ENCODE measurements at regions of chr2 and their contacts with region 1.

Region 1: GRCh38 chr2:235191978-235192377 is 240.2 kb downstream of the SH3BP4 start:
- DNase-seq: no peak
- H3K4me3 ChIP-seq: no peak overlapping the region
- CTCF ChIP-seq: no peak
- POLR2A ChIP-seq: no peak

Region 2: DNA sequence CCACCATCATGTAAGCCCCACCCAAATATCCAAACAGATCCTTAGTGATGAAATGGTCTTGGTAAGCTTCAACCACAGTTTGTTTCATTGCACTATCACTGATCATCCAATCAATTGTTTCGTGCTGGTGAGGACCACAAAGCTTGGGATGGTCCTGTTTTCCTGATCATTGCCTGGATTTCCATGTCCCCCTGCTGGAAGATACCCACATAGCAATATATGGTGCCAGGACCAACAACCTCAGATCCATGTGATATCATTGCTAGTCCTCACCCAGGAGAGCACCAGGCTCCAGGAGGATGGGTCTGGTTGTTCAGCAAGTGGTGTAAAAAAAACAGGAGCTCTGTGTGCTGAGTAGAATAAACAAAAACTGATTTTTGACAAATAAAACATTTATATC is 446.6 kb before region 1 on chr2:
- intact Hi-C with region 1: loop called (anchors 5 kb)
- DNase-seq: no peak
- H3K4me3 ChIP-seq: no peak overlapping the region
- CTCF ChIP-seq: no peak
- POLR2A ChIP-seq: no peak

Measured in lower leg skin (tissue), 4 donors.